B cell (primary cell): ENCODE measurements at regions of chr19 and their contacts with region 1.

Region 1: GRCh38 chr19:50357178-50358100 is 8.0 kb downstream of the NAPSA start:
- DNase-seq: peak; percentile 94
- ATAC-seq: peak; percentile 81
- H3K4me3 ChIP-seq: peak overlapping the region; percentile 64 to 99 (median 68)
- H3K4me3 Mint-ChIP-seq: peak overlapping the region; percentile 94
- H3K27ac ChIP-seq: peak overlapping the region; percentile 95 to 99
- H3K27ac Mint-ChIP-seq: peak overlapping the region; percentile 98
- H3K4me1 ChIP-seq: peaks cover 13 to 34% of the 10 kb centered on the region in 2 donors
- H3K4me1 Mint-ChIP-seq: peaks cover 39% of the 10 kb centered on the region
- H3K27me3 ChIP-seq: no peaks in the 10 kb centered on the region
- H3K27me3 Mint-ChIP-seq: no peaks in the 10 kb centered on the region
- CTCF ChIP-seq: peak; percentile 89

Region 2: GRCh38 chr19:50341091-50341564 is 16.3 kb before region 1 on chr19:
- CTCF ChIA-PET with region 1: interaction called, 44 read pairs
- POLR2A ChIA-PET with region 1: interaction called, 25 read pairs
- intact Hi-C with region 1: loop called (anchors 2 kb)
- DNase-seq: peak; percentile 81
- ATAC-seq: peak; percentile 56
- H3K4me3 ChIP-seq: peak overlapping the region in 4 of 5 experiments; percentile 61 to 91 (median 76)
- H3K4me3 Mint-ChIP-seq: peak overlapping the region; percentile 86
- H3K27ac ChIP-seq: peak overlapping the region; percentile 37 to 72
- H3K27ac Mint-ChIP-seq: peak overlapping the region; percentile 91
- H3K4me1 ChIP-seq: peaks cover 65 to 84% of the 10 kb centered on the region in 2 donors
- H3K4me1 Mint-ChIP-seq: peaks cover 77% of the 10 kb centered on the region
- H3K27me3 ChIP-seq: no peaks in the 10 kb centered on the region
- H3K27me3 Mint-ChIP-seq: no peaks in the 10 kb centered on the region
- CTCF ChIP-seq: no peak

Region 3: DNA sequence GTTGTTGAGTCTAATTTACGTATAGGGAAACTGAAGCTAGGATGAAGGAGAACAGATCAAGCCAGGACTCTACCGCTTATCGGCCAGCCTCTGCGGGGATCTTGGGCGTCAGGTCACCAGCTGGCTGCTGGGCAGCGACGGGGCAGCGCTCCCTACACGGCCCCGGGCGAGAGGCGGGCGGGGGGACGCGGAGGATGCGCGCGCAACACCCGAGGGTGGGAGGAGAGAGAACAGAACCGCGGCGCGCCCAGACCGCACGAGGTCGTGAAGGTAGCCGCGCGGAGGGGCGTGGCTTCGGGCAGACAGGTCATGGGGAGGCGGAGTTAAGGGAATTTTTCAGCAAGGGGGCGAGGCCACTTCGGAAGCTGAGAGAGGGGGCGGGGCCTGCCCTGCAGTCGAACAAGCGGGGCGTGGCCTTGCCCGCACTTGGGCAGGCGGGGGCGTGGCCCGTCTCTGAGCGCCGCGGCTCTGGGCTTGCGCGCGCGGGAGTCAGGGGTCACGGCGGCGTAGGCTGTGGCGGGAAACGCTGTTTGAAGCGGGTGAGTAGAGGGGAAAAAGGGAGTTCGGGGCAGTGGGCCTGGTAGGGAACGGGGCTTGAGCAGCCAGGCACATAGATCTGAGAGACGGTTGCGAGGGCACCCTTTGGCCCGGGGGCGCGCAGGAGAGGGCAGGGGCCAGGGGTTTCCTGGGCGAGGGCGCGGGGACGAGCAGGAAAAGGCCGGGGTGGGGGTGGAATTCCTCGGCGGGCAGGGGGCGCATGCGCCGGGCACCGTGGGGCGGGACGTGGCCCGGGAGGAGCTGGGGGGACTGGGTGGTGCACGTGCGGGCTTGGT is 26.6 kb after region 1 on chr19 and contains the start of gene POLD1:
- CTCF ChIA-PET with region 1: interaction called, 4 read pairs
- POLR2A ChIA-PET with region 1: no interaction called
- intact Hi-C with region 1: loop called (anchors 1 kb)
- DNase-seq: peak; percentile 100
- ATAC-seq: peak; percentile 96
- H3K4me3 ChIP-seq: peak within 1 kb of the TSS; percentile 59 to 92 (median 67)
- H3K4me3 Mint-ChIP-seq: peak within 1 kb of the TSS; percentile 94
- H3K27ac ChIP-seq: peak within 1 kb of the TSS; percentile 64 to 73
- H3K27ac Mint-ChIP-seq: peak within 1 kb of the TSS; percentile 92
- H3K4me1 ChIP-seq: peaks cover 12 to 18% of the 10 kb centered on the region in 2 donors
- H3K4me1 Mint-ChIP-seq: peaks cover 31% of the 10 kb centered on the region
- H3K27me3 ChIP-seq: no peaks in the 10 kb centered on the region
- H3K27me3 Mint-ChIP-seq: no peaks in the 10 kb centered on the region
- CTCF ChIP-seq: no peak
- total RNA-seq, gene POLD1: 43.6 and 52.4 TPM in 2 replicates

Region 4: DNA sequence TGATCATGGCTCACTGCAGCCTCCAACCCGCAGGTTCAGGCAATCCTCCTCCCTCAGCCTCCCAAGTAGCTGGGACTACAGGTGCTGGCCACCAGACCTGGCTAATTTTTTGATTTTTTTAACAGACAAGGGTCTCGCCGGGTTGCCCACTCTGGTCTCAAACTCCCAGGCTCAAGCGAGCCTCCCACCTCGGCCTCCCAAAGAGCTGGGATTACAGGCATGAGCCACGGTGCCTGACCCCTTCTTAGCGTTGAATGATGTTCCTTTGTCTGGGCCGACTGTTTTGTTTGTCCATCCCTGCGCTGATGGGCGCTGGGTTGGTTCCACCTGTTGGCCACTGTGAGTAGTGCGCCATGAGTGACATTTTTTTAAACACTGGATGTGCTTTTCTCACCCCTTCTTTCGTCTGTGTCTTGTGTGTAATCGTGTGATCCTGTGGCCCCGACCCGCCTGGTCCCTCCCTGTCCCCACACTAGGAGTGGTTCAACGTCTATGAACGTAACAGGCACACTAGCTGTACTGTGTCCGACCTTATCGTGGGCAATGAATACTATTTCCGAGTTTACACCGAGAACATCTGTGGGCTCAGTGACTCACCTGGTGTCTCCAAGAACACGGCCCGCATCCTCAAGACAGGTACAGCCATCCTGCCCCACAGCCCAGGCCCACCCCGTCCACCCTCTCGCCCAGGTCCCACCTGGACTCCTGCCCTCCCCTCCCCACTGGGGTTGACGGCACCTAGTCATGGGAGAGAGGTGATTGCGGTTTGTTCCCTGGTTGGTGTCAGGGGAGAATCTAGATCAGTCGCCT is 103.8 kb after region 1 on chr19:
- CTCF ChIA-PET with region 1: interaction called, 76 read pairs
- POLR2A ChIA-PET with region 1: interaction called, 16 read pairs
- intact Hi-C with region 1: loop called (anchors 1 kb)
- DNase-seq: peak; percentile 87
- ATAC-seq: peak; percentile 70
- H3K4me3 ChIP-seq: no peak overlapping the region
- H3K4me3 Mint-ChIP-seq: peak overlapping the region; percentile 54
- H3K27ac ChIP-seq: peak overlapping the region; percentile 79 to 84
- H3K27ac Mint-ChIP-seq: peak overlapping the region; percentile 74
- H3K4me1 ChIP-seq: peaks cover 21 to 26% of the 10 kb centered on the region in 2 donors
- H3K4me1 Mint-ChIP-seq: peaks cover 18% of the 10 kb centered on the region
- H3K27me3 ChIP-seq: no peaks in the 10 kb centered on the region
- H3K27me3 Mint-ChIP-seq: no peaks in the 10 kb centered on the region
- CTCF ChIP-seq: peak; percentile 93

Region 5: DNA sequence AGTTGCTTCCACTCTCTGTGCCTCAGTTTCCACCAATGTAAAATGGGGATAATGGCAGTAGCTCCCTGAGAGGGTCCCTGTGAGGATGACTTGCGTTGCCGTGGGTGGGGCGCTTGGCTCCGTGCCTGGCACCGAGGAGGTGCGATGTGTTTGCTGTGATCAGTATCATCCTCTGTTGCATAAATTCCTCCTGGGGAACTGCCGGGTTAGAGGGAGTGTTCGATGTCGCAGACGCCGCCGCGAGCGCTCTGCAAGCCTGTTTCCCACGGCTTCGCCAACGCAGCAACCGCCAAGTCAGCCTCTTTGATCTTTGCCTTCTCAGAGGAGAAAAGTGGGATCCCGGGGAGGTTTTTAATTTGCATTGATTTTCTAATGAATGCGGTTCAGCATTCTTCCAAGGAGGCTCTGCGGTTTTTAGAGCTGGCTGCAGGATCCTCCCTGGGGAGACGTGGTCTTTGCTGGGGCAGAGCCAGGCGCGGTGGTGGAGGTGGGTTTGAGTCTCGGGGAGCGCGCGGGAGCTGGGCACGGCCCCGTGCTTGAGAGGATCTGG is 420.4 kb after region 1 on chr19:
- CTCF ChIA-PET with region 1: interaction called, 12 read pairs
- POLR2A ChIA-PET with region 1: interaction called, 7 read pairs
- intact Hi-C with region 1: no loop called
- DNase-seq: peak; percentile 15
- ATAC-seq: no peak
- H3K4me3 ChIP-seq: no peak overlapping the region
- H3K4me3 Mint-ChIP-seq: no peak overlapping the region
- H3K27ac ChIP-seq: no peak overlapping the region
- H3K27ac Mint-ChIP-seq: no peak overlapping the region
- H3K4me1 ChIP-seq: peaks cover 0 to 8% of the 10 kb centered on the region in 2 donors
- H3K4me1 Mint-ChIP-seq: peaks cover 4% of the 10 kb centered on the region
- H3K27me3 ChIP-seq: peaks cover 0 to 62% (median 26%) of the 10 kb centered on the region in 4 experiments
- H3K27me3 Mint-ChIP-seq: peaks cover 64% of the 10 kb centered on the region
- CTCF ChIP-seq: no peak

Region 6: DNA sequence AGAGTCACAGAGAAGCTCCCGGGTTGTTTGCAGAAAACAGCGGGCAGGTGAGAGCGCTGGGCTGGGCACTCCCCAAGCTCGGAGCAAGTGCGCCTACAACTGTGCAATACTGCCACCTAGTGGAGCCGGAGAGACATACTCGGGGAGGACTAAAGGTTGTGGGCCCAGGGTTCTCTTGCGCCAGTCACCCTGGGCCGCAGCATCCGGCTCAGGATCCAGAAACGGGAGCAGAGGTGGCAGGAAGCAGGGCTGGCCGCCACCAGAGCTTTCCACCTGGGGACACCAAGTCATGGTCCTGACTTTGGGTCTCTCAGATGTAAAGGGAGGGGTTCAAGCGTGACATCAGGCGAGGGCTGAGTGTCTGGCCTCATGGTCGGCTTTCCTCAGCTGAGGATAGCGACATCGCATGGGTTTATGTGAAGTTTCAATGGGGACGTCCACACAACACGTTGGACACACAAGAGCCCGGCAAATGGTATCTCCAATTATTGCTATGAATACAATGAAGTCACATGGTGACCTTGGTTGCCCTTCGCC is 564.9 kb after region 1 on chr19:
- CTCF ChIA-PET with region 1: interaction called, 18 read pairs
- POLR2A ChIA-PET with region 1: no interaction called
- intact Hi-C with region 1: no loop called
- DNase-seq: peak; percentile 89
- ATAC-seq: peak; percentile 99
- H3K4me3 ChIP-seq: no peak overlapping the region
- H3K4me3 Mint-ChIP-seq: peak overlapping the region; percentile 36
- H3K27ac ChIP-seq: no peak overlapping the region
- H3K27ac Mint-ChIP-seq: peak overlapping the region; percentile 37
- H3K4me1 ChIP-seq: peaks cover 8 to 11% of the 10 kb centered on the region in 2 donors
- H3K4me1 Mint-ChIP-seq: peaks cover 11% of the 10 kb centered on the region
- H3K27me3 ChIP-seq: peaks cover 0 to 11% (median 5%) of the 10 kb centered on the region in 4 experiments
- H3K27me3 Mint-ChIP-seq: peaks cover 42% of the 10 kb centered on the region
- CTCF ChIP-seq: peak; percentile 91